PC-9 (cell line): ENCODE measurements at regions of chr19 and their contacts with region 1.

Region 1: DNA sequence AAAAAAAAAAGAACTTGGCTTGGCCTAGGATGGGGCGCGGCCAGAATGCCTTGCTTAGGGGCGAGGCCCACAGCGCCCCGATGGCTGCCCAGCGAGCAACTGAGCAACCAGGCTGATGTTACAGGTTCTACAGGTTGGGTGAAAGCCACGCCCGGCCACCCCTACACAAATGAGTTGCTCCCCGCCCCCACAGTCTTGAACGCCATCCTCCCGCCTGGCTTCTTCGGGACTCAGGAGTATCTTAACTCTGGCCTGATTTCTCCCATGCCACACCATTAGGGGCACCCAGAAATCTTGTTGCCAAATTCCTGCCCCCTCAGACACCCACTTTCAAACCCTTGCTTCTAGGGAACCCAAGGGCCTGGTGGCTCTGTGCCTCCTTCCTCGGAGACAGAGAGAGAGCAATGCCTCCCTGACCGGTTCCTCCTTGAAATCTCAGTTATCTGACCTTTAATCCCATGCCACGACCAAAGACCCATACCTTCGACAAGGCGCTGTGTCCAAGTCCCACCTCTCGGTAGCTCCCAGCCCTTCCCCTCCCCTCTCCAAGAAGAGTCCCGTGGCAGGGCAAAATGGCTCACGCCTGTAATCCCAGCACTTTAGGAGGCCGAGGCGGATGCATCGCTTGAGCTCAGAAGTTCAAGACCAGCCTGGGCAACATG is 1.1 kb upstream of the CBLC start:
- DNase-seq: peak; percentile 96 to 97
- H3K4me3 ChIP-seq: peak overlapping the region; percentile 99
- H3K27ac ChIP-seq: peak overlapping the region; percentile 97
- H3K4me1 ChIP-seq: peaks cover 73% of the 10 kb centered on the region
- H3K27me3 ChIP-seq: no peaks in the 10 kb centered on the region
- CTCF ChIP-seq: no peak

Region 2: GRCh38 chr19:44576843-44577565 is 199.6 kb before region 1 on chr19:
- CTCF ChIA-PET with region 1: interaction called, 11 read pairs
- POLR2A ChIA-PET with region 1: no interaction called
- intact Hi-C with region 1: loop called (anchors 2 kb)
- DNase-seq: peak; percentile 58 to 69
- H3K4me3 ChIP-seq: no peak overlapping the region
- H3K27ac ChIP-seq: peak overlapping the region; percentile 97
- H3K4me1 ChIP-seq: peaks cover 56% of the 10 kb centered on the region
- H3K27me3 ChIP-seq: no peaks in the 10 kb centered on the region
- CTCF ChIP-seq: peak; percentile 80

Region 3: DNA sequence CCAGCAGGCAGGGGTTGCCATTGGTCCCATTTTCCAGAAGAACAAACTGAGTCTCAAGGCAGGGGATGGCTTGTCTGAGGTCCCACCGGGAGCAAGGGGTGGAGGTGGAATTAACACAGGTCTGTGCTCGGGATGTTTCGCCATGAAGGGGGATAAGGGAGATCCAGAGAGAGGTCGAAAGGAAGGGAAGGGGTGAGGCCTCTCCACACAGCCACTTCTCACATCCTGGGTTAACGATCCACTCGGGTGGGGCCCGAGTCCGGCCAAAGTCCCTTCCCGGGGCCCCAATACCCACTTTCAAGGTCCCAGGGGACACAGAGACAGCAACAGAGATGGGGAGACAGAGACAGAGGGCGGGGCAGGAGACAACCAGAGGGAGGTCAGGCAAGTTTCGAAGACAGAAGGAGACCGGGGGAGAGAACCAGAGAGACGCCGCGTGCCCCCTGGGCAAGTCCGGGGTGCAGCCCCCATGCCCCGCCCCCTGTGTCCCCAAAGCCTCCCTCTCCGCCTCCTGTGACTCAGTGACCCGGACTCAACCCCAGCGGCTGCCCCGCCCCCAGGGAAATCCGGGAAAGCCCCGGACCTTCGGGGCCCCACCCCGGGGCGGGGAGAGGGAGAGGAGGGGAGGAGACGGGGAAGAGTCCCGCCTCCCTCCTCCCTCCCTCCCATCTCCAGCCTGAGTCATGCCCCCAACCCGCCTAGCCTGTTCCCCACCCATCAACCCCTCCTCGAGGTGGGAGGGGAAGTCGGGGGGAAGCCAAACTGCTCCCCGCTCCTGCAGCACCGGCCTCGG is 29.4 kb before region 1 on chr19:
- CTCF ChIA-PET with region 1: no interaction called
- POLR2A ChIA-PET with region 1: no interaction called
- intact Hi-C with region 1: loop called (anchors 1 kb)
- DNase-seq: peak; percentile 87 to 97
- H3K4me3 ChIP-seq: peak overlapping the region; percentile 78
- H3K27ac ChIP-seq: peak overlapping the region; percentile 95
- H3K4me1 ChIP-seq: peaks cover 66% of the 10 kb centered on the region
- H3K27me3 ChIP-seq: no peaks in the 10 kb centered on the region
- CTCF ChIP-seq: no peak

Region 4: DNA sequence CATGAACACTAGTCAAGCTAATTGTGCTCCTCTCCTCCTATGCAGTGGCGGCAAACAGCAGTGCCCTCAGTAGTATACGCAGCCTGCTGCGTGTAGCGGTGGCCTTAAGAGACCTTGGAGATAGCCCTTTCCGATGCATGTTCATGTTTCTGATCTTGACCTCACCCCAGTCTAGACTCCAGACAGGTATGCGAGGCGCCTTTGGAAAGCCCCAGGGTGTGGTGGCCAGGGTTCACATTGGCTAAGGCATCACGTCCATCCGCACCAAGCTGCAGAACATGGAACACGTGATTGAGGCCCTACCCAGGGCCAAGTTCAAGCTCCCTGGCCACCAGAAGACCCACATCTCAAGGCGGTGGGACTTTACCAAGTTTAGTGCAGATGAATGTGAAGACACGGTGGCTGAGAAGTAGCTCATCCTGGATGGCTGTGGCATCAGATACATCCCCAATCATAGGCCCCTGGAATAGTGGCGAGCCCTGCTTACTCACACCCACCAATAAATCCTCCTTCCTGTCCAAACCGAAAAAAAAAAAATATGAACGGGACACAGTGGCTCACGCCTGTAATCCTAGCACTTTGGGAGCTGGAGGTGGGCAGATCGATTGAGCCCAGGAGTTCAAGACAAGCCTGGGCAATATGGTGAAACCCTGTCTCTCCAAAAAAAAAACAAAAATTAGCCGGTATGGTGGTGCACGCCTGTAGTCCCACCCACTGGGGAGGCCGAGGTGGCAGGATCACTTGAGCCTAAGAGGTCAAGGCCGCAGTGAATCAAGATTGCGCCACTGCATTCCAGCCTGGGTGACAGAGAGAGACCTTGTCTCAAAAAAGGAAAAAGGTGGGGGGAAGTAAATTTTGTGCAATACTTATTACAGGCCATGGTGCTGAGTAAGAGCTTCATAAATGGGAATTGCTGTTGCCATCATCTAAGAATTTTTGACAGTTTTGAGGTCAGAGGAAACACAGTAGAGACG is 11.3 kb before region 1 on chr19:
- CTCF ChIA-PET with region 1: no interaction called
- POLR2A ChIA-PET with region 1: interaction called, 15 read pairs
- intact Hi-C with region 1: no loop called
- DNase-seq: peak in 1 of 2 experiments; percentile 71
- H3K4me3 ChIP-seq: no peak overlapping the region
- H3K27ac ChIP-seq: peak overlapping the region; percentile 31; the same call in 1 of the 2 replicates
- H3K4me1 ChIP-seq: peaks cover 22% of the 10 kb centered on the region
- H3K27me3 ChIP-seq: no peaks in the 10 kb centered on the region
- CTCF ChIP-seq: no peak

Region 5: DNA sequence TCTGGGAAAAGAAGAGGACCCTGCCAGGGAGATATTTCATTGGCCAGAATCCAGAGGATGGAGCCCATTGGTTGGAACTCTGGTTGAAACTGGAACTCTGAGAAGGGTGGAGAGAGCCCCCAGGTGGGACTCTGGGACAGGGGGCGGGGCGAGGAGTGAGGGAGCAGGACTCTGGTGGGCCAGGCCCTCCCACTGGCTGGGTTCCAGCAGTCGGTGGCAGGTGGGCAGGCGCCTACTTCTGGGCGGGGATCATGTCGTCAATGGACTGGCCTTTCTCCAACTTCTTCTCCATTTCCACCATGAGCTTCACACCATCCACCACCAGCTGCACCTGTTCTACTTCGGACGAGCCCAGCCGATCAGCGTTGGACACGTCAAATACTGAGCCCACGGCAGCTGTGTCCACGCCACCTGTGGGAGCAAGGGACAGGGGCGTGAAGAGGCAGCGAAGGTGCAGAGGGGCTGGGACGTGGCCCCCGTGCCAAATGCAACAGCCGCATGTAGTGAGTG is 530.0 kb after region 1 on chr19:
- CTCF ChIA-PET with region 1: no interaction called
- POLR2A ChIA-PET with region 1: interaction called, 20 read pairs
- intact Hi-C with region 1: no loop called
- DNase-seq: no peak
- H3K4me3 ChIP-seq: no peak overlapping the region
- H3K27ac ChIP-seq: no peak overlapping the region
- H3K4me1 ChIP-seq: no peaks in the 10 kb centered on the region
- H3K27me3 ChIP-seq: no peaks in the 10 kb centered on the region
- CTCF ChIP-seq: no peak